Activated B cell treated with CpG ODN at 0.5 μM for 24 hours (primary cell): ENCODE measurements at regions of chr16 and their contacts with region 1.

Region 1: DNA sequence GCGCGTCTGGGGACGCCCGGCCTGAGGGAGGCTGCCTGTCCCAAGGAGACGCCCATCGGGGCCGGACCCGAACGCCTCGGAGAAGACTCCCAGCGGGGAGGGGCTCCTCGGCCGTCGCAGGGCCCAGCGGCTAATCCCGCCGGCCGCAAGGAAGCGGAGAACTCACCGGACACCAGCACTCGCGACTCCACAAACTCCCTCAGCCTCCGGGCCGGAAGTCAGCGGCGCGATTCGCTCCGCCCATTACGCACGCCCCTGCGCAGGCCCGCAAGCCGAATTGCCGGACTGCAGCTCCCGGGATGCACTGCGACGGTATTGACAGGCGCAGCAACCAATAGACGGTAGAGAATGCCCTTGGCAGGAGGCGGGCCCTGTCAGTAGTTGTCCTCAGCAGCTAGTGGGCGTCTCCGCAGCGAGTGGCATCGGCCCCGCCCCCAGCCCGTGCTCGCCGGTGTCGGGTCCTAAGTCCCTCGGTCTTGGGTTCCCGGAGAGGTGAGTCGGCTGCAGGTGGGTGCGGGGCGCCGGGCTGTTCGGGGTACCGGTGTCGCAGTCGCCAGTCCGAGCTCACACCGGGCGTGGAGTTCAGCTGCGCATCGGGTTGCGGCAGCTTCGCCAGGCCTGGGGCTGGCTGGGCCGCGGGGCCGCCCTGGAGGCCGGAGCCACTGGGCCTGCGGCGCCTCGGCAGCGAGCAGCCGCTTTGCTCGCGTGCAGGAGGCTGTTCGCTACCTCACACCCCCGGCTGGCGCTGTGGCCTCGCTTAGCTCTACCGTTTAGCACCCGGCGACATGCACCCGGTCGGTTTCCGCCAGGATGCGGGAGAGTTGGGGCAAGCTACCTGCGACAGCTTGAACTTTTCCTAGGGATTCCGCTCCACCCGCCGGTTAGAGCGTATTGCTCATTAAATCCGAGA is at the starts of genes ZNF174 and ZSCAN32:
- DNase-seq: peak; percentile 96
- ATAC-seq: peak; percentile 98
- H3K4me3 Mint-ChIP-seq: peak within 1 kb of the TSS; percentile 87
- H3K27ac Mint-ChIP-seq: peak within 1 kb of the TSS; percentile 76
- H3K4me1 Mint-ChIP-seq: peaks cover 45% of the 10 kb centered on the region
- H3K27me3 Mint-ChIP-seq: no peaks in the 10 kb centered on the region
- CTCF ChIP-seq: no peak
- total RNA-seq, gene ZNF174: 9.0 and 10.4 TPM in 2 replicates
- total RNA-seq, gene ZSCAN32: 21.6 and 21.7 TPM in 2 replicates

Region 2: GRCh38 chr16:3234543-3235541 is 166.2 kb before region 1 on chr16 and contains the start of gene ZNF200:
- CTCF ChIA-PET with region 1: no interaction called
- POLR2A ChIA-PET with region 1: interaction called, 6 read pairs
- intact Hi-C with region 1: loop called (anchors 1 kb)
- DNase-seq: peak; percentile 88
- ATAC-seq: peak; percentile 91
- H3K4me3 Mint-ChIP-seq: peak within 1 kb of the TSS; percentile 94
- H3K27ac Mint-ChIP-seq: peak within 1 kb of the TSS; percentile 96
- H3K4me1 Mint-ChIP-seq: peaks cover 24% of the 10 kb centered on the region
- H3K27me3 Mint-ChIP-seq: no peaks in the 10 kb centered on the region
- CTCF ChIP-seq: no peak
- total RNA-seq, gene ZNF200: 13.6 and 15.1 TPM in 2 replicates

Region 3: GRCh38 chr16:3305109-3306068 is 95.6 kb before region 1 on chr16 and contains the starts of genes TIGD7 and ZNF75A:
- CTCF ChIA-PET with region 1: no interaction called
- POLR2A ChIA-PET with region 1: interaction called, 22 read pairs
- intact Hi-C with region 1: loop called (anchors 1 kb)
- DNase-seq: peak; percentile 83
- ATAC-seq: peak; percentile 91
- H3K4me3 Mint-ChIP-seq: peak within 1 kb of the TSS; percentile 88
- H3K27ac Mint-ChIP-seq: peak within 1 kb of the TSS; percentile 88
- H3K4me1 Mint-ChIP-seq: peaks cover 26% of the 10 kb centered on the region
- H3K27me3 Mint-ChIP-seq: no peaks in the 10 kb centered on the region
- CTCF ChIP-seq: no peak
- total RNA-seq, gene TIGD7: 6.7 and 11.0 TPM in 2 replicates
- total RNA-seq, gene ZNF75A: 84.0 and 97.9 TPM in 2 replicates

Region 4: GRCh38 chr16:3443108-3444031 is 42.3 kb after region 1 on chr16 and contains the starts of genes NAA60 and ZNF597:
- CTCF ChIA-PET with region 1: no interaction called
- POLR2A ChIA-PET with region 1: interaction called, 19 read pairs
- intact Hi-C with region 1: loop called (anchors 2 kb)
- DNase-seq: peak; percentile 52
- ATAC-seq: peak; percentile 96
- H3K4me3 Mint-ChIP-seq: peak within 1 kb of the TSS; percentile 98
- H3K27ac Mint-ChIP-seq: peak within 1 kb of the TSS; percentile 95
- H3K4me1 Mint-ChIP-seq: peaks cover 20% of the 10 kb centered on the region
- H3K27me3 Mint-ChIP-seq: peaks cover 2% of the 10 kb centered on the region
- CTCF ChIP-seq: no peak
- total RNA-seq, gene NAA60: 44.1 and 48.0 TPM in 2 replicates
- total RNA-seq, gene ZNF597: 3.6 and 4.2 TPM in 2 replicates

Region 5: DNA sequence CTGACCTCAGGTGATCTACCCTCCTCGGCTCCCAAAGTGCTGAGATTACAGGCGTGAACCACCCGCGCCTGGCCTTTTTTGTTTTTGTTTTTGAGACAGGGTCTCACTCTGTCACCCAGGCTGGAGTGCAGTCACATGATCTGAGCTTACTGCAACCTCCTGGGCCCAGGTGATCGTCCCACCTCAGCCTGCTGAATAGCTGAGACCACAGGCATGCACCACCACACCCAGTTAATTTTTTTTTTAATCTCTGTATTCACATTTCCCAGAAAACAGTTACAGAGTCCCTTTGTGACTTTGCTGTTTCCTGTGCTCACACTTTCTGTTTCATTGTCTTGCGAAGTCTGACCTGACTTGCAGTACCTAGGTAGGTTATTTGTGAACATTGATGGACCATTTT is 102.5 kb after region 1 on chr16:
- CTCF ChIA-PET with region 1: interaction called, 3 read pairs
- POLR2A ChIA-PET with region 1: interaction called, 3 read pairs
- intact Hi-C with region 1: loop called (anchors 1 kb)
- DNase-seq: no peak
- ATAC-seq: no peak
- H3K4me3 Mint-ChIP-seq: peak overlapping the region; percentile 15
- H3K27ac Mint-ChIP-seq: no peak overlapping the region
- H3K4me1 Mint-ChIP-seq: peaks cover 29% of the 10 kb centered on the region
- H3K27me3 Mint-ChIP-seq: no peaks in the 10 kb centered on the region
- CTCF ChIP-seq: no peak